ENCODE measurements at regions of chr1 and their contacts with region 1.

Region 1: DNA sequence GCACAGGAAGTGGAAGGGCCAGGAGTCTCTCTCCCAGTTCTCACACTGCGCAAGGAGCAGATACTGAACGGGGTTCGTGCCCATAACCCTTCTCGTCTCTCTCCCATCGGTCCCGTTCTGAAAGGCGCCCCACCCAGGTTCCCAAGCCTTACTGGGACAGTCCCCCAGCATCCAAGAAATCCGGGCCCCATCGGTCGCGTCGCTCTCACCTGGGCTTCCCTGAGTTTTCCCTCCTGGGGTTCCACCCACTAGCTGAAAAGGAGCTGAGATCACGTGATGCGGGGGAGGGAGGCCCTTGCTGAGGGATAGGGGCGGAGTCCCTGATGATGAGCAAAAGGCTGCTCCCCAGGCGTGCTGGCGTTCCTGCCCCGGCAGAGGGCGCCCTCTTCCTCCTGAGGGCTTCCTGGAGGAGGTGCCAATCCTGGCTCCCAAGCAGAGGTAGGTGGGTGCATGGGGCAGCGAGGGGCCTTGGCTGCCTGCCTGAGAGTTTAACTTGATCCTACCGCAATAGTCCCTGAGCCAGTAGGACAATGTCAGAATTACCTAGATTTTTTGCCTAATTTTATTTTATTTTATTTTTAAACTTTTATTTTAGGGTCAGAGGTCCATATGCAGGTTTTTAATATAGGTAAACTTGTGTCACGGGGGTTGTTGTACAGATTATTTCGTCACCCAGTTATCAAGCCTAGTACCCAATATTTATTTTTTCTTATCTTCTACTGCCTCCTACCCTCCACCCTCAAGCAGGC is at the start of gene SPOCD1:
- DNase-seq: peak; percentile 89 to 90
- ATAC-seq: peak; percentile 99
- total RNA-seq, gene SPOCD1: 0.45 to 0.79 TPM

Region 2: DNA sequence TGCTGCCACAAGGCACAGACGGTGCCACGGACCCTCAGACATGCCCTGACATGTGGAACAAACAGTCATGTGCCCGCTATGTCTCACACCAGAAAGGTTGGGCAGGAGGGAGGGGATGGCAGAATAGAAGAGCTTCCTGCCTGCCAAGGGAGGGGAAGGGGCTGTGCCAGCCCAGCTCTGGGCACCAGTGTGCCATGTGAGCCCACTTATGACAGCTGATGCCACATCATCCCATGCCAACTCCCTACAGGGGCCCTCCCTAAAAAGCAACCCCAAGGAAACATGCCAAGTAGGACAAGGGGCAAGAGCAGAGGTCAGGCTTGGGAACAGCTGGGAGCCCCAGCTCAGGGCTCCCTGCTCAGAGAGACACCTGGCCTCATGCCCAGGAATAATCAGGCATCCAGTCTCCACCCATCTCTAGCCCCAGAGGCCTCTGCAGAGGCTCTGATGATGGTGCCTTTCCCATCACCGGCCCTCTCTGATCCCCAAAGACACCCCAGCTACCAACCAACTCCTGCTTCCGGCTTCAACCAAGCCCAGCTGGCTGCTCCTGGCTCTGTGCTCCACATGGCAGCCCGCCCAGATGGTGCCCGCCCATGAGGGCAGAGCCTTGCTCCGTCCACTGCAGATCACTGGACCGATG is 62.1 kb before region 1 on chr1:
- intact Hi-C with region 1: no loop called
- DNase-seq: peak; percentile 81 to 82
- ATAC-seq: peak; percentile 92

Region 3: DNA sequence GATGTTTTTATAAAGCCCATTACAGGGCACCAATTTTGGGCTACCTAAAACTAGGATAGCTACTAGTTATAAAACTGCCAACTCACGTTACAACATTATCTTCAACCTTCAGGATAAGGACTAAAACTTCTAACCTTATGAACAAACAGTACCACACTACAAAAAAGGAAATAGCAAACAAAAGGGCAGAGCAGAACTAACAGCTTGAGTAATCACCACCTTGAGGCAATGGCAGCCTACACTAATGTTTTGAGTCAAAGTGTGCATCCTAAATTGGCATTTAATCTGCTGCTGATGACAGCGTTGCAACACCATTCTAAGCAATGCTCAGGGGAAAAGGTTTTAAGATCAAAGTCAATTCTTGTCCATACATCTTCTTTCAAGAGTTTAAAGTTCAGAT is 95.0 kb after region 1 on chr1:
- intact Hi-C with region 1: loop called in 1 of 2 experiments (anchors 10 kb)
- DNase-seq: no peak
- ATAC-seq: no peak

Region 4: DNA sequence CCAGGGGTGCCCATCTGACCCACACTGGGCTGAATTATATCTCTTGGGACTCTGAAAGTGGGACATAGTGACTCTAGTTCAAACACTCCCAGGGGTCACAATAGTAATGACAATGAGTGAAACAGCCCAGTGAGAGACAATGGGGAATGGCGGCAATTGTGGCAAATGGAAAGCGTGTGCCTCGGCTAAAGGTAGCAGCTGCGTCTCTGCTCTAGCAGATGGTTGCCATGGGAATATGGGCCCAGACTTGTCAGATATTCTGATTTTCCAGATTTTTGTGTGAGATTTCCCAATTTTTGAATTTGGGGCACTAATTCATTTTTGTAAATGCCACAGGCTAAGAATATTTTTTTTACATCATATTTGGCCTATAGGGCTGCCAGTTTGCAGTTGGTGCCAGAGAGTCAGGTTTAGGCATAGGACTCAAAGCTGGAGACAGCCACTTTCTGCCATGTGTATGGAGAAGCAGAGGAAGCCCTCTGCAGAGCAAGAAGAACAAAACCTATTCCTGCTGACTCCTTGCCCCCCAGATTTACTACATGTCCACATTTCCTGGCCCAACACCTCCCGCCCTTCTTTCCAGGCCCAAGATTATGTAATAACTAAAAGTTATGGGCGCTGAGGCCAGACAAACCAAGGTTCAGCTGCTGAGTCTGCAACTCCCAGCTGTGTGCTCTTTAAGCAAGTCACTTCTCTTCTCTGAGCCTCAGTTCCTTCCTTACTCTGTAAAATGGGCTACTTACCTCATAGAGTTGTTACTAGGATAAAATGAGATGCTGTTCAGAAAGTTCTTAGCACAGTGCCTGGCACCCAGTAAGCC is 143.8 kb after region 1 on chr1:
- intact Hi-C with region 1: loop called in 1 of 2 experiments (anchors 10 kb)
- DNase-seq: no peak
- ATAC-seq: no peak